OCI-LY7 (cell line): ENCODE measurements at regions of chr3 and their contacts with region 1.

Region 1: GRCh38 chr3:18499301-18499700 is 74.2 kb upstream of the SATB1 start:
- DNase-seq: peak; percentile 90
- H3K4me3 ChIP-seq: peak overlapping the region; percentile 40
- H3K27ac ChIP-seq: peak overlapping the region; percentile 75
- H3K4me1 ChIP-seq: peaks cover 35% of the 10 kb centered on the region
- CTCF ChIP-seq: no peak

Region 2: DNA sequence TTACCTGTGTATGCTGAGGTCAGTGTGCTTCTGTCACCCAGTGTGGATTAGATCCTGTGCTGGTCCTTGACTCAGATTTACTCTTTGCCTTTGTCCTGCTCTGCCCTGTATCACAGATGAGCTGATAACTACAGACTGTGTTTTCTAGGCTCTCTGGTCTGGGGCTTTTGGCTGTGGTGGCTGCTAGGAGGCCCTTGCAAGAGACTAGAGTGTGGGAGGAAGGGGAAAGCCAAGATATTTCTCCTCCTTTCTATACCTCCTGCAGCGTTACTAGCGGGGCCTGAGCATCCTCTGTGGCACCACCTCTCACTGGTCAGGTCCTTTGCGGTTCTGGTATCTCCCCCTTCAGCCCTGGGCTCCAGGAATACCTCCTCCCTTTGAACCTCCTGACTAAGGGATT is 474.6 kb before region 1 on chr3:
- CTCF ChIA-PET with region 1: no interaction called
- POLR2A ChIA-PET with region 1: no interaction called
- intact Hi-C with region 1: no loop called
- DNase-seq: no peak
- H3K4me3 ChIP-seq: no peak overlapping the region
- H3K27ac ChIP-seq: no peak overlapping the region
- H3K4me1 ChIP-seq: no peaks in the 10 kb centered on the region
- CTCF ChIP-seq: no peak

Region 3: DNA sequence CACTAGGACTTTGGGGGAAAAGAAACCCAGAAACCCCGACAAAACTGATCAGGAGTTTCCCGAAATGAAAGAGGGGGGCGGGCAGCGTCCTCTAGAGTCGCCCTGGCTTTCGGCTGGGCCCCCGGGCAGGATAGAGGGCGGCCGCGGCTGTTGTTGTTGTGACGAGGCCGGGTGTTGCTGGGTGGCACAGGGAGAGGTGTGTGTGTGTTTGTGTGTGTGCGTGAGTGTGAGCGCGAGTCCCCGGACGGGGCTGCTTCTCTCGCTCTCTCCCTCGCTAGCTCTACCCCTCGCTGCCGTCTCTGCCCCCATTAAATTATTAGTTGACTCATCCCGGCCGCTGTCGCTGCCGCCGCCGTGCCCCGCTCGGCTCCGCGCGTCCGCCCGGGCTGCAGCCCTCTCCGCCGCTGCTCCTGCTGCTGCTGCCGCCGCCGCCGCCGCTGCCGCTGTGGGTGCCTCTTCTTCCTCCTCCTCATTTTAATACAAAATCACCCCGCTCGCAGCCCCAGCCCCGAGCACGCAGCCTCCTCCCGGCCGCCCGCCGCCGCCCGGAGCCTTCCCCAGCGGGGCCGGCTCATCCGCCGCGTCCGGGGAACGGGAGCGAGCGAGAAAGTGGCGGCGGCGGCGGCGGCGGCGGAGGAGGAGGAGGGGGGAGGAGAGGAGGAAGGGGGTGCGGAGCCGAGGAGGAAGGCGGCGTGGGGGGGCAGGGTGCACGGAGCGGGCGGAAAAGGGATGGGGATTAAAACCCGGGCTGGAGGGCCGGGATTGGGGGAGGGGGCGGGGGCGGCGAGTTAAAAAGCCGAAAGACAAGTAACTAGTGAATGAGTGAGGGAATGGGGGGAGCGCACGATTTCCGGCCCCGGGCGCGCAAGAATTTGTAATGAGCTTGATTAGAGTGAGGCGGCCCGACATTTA is 74.3 kb before region 1 on chr3 and contains the start of gene SATB1:
- CTCF ChIA-PET with region 1: no interaction called
- POLR2A ChIA-PET with region 1: no interaction called
- intact Hi-C with region 1: loop called (anchors 5 kb)
- DNase-seq: peak; percentile 62
- H3K4me3 ChIP-seq: peak within 1 kb of the TSS; percentile 81
- H3K27ac ChIP-seq: no peak within 1 kb of the TSS
- H3K4me1 ChIP-seq: peaks cover 12% of the 10 kb centered on the region
- CTCF ChIP-seq: no peak
- total RNA-seq, gene SATB1: 5.6 and 8.7 TPM in 2 replicates

Region 4: GRCh38 chr3:19526071-19526470 is 1026.8 kb after region 1 on chr3:
- CTCF ChIA-PET with region 1: no interaction called
- POLR2A ChIA-PET with region 1: no interaction called
- intact Hi-C with region 1: loop called (anchors 10 kb)
- DNase-seq: no peak
- H3K4me3 ChIP-seq: no peak overlapping the region
- H3K27ac ChIP-seq: no peak overlapping the region
- H3K4me1 ChIP-seq: peaks cover 1% of the 10 kb centered on the region
- CTCF ChIP-seq: no peak